PC-9 (cell line): ENCODE measurements at regions of chr20 and their contacts with region 1.

Region 1: DNA sequence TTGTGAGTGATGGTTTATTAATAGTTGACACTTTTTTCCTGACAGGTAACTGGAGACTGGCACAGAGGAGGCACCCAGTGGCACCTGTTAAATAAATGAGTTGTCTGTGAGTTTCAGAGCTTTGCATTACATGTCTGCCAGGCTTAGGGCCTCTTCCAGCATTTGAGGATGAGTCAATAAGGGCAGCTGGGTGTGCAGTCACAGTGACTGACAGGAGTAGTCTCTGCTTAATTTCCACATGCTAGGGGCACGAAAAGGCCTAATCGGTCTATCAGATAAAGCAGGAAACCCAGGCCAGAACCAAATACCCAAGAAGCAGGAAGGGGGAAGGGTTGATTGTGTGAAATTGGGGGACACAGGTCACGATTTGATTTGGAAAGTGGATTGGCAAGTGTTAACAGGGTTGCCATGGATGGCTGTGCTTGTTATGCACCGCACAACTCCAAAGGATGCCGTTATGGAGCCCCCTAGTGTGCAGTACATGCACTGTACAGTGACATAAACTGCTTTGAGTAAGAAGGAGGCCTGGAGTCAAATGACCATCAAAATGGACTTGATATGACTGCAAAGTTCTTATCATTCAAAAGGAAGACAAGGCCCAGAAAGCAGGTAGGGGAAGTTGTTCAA is 111.9 kb upstream of the GGTLC1 start:
- DNase-seq: peak; percentile 70 to 78
- H3K4me3 ChIP-seq: no peak overlapping the region
- H3K27ac ChIP-seq: peak overlapping the region; percentile 25; the same call in 1 of the 2 replicates
- H3K4me1 ChIP-seq: peaks cover 98% of the 10 kb centered on the region
- H3K27me3 ChIP-seq: no peaks in the 10 kb centered on the region
- CTCF ChIP-seq: peak; percentile 80

Region 2: GRCh38 chr20:23879811-23880374 is 220.6 kb before region 1 on chr20:
- CTCF ChIA-PET with region 1: interaction called, 3 read pairs
- POLR2A ChIA-PET with region 1: no interaction called
- intact Hi-C with region 1: loop called (anchors 5 kb)
- DNase-seq: peak; percentile 89 to 96
- H3K4me3 ChIP-seq: no peak overlapping the region
- H3K27ac ChIP-seq: peak overlapping the region; percentile 71
- H3K4me1 ChIP-seq: peaks cover 78% of the 10 kb centered on the region
- H3K27me3 ChIP-seq: no peaks in the 10 kb centered on the region
- CTCF ChIP-seq: no peak

Region 3: DNA sequence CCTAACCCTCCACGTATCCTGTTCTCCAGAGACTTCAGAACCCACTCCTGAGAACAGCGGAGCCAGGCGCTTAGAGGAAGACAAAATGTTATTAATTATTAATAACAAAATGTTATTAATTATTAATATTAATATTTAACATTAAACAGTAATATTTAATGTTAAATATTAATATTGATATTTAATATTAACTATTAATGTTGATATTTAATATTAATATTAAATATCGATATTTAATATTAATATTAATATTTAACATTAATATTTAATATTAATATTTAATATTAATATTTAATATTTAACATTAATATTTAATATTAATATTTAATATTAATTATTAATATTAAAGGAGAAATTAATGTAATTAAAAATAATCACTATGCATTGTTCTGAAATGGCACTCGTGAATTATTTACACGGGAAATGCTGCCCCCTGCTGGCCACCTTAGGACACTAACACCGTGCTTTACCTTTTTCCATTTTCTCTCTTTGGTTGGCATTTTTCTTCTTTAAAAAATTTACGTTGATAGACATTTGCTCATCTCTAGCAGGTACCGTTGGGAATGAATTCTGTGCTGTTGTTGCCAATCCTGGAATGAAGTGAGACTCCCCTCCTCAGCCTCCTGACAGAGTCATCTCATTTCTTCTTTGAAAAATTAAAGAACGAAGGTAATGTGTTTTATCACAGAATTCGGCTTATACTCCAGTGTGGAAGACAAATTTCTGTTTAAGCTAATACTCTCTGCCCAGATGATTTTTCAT is 104.4 kb before region 1 on chr20:
- CTCF ChIA-PET with region 1: interaction called, 5 read pairs
- POLR2A ChIA-PET with region 1: interaction called, 10 read pairs
- intact Hi-C with region 1: loop called (anchors 2 kb)
- DNase-seq: peak in 1 of 2 experiments; percentile 45
- H3K4me3 ChIP-seq: no peak overlapping the region
- H3K27ac ChIP-seq: no peak overlapping the region
- H3K4me1 ChIP-seq: 0 out of 2 replicates have a peak, but pooled peaks cover 7% of the 10 kb centered on the region
- H3K27me3 ChIP-seq: no peaks in the 10 kb centered on the region
- CTCF ChIP-seq: peak; percentile 84

Region 4: DNA sequence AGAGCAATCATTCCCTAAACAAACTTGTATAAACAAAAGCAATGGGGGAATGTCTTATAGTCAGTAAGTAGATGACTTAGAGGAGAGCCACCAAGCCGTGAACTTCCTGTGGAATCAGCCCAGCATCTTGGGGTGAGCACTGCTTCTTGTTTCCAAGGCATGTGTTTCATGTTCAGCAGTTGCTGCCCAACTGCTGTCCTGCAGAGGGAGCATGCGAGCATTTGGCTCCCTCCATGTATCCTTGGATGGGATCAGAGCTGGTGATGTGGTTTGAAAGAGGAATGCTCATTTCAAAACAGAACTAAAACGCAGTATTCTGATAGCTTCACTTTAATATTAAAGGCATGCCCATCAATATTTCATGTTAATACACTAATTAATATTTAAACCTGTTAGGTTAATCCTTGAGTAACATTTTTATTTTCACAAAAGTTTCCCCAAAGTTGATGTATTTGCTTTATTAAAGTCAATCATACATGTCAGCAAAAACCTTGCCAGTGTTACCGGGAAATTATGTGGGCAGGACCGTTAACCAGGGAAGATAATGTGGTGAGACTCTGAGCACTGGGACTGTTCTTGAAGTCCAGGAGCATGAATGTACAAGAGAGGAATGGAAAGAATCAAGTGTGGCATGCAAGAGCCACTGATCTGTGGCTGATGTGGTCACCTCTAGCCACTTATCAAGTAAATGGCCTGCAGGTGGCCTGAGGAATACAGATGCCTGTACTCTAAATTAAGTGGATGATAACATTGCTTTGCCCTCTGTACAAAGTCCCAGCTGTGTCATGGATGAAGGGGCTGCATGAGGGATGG is 60.3 kb after region 1 on chr20:
- CTCF ChIA-PET with region 1: interaction called, 4 read pairs
- POLR2A ChIA-PET with region 1: interaction called, 5 read pairs
- intact Hi-C with region 1: loop called (anchors 1 kb)
- DNase-seq: peak in 1 of 2 experiments; percentile 36
- H3K4me3 ChIP-seq: no peak overlapping the region
- H3K27ac ChIP-seq: no peak overlapping the region
- H3K4me1 ChIP-seq: peaks cover 15% of the 10 kb centered on the region
- H3K27me3 ChIP-seq: no peaks in the 10 kb centered on the region
- CTCF ChIP-seq: peak; percentile 74

Region 5: GRCh38 chr20:24445510-24446170 is 345.1 kb after region 1 on chr20:
- CTCF ChIA-PET with region 1: no interaction called
- POLR2A ChIA-PET with region 1: no interaction called
- intact Hi-C with region 1: no loop called
- DNase-seq: no peak
- H3K4me3 ChIP-seq: no peak overlapping the region
- H3K27ac ChIP-seq: no peak overlapping the region
- H3K4me1 ChIP-seq: no peaks in the 10 kb centered on the region
- H3K27me3 ChIP-seq: no peaks in the 10 kb centered on the region
- CTCF ChIP-seq: no peak

Region 6: DNA sequence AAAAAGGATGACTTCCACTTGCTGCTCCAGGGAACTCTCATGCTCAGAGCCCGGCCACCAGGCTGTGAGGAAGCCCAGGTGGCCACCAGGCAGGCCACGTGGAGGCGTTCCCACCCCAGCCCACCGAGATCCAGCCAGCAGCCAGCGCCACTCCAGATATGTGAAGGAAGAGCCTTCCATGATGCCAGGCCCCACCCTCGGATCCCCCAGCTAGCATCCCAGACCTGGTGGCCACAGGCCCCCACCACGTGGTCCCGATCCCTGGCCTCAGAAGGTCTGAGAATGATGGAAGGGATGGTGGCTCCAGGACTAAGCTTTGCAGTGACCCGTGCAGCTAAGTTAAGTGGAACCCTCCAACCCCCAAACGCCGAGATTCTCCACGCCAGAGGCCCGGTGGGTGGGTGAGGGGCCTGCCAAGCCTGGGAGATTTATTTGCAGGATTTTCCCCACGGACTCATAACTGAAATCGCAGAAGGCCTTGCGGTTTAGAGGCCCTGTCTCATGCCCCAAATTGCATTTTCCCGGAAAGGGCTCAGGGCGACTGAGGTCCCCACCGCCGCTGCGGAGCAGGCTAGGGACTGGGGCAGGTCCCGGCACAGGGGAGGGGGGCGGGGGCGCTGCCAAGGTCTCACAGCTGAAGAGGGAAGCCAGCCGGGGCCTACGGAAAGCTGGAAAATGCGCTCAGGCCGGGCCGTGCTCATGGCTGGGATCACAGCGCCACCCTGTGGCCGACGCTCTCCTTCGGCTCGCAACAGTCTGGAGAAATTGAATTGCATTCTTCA is 817.5 kb after region 1 on chr20:
- CTCF ChIA-PET with region 1: interaction called, 3 read pairs
- POLR2A ChIA-PET with region 1: no interaction called
- intact Hi-C with region 1: loop called (anchors 1 kb)
- DNase-seq: peak; percentile 49 to 62
- H3K4me3 ChIP-seq: no peak overlapping the region
- H3K27ac ChIP-seq: no peak overlapping the region
- H3K4me1 ChIP-seq: 0 out of 2 replicates have a peak, but pooled peaks cover 5% of the 10 kb centered on the region
- H3K27me3 ChIP-seq: no peaks in the 10 kb centered on the region
- CTCF ChIP-seq: peak; percentile 93